SK-N-SH (cell line): ENCODE measurements at regions of chr9 and their contacts with region 1.

Region 1: DNA sequence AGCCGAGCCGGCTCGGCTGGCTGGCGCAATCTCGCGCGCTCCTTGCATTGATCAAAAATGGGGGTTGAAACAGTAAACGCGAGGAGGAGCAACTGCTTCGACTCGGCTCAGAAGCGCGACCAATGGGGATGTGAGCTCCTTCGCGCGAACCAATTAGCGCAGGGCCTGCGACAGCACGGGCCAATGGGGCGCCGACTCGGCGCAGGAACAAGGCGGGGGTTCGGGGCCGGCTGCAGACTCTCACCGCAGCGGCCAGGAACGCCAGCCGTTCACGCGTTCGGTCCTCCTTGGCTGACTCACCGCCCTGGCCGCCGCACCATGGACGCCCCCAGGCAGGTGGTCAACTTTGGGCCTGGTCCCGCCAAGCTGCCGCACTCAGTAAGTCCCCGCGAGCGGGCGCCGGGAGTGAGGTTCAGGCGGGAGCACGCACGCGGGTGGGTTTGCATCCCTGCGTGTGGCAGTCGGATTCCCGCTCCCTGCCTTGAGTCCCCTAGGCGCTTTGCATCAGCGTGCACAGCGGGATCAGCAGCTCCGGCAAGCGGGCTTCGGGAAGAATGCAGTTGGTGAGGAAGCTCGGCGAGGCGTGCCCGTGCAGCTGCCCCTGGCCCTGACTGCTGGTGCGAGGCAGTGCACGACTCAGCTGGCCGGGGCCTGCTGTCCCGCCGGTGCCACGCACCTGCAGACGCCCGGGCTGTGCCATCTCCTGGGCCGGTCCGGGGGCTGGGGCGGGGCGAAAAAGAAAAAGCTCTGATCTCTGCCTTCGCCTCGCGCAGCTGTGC is at the start of gene PSAT1:
- DNase-seq: peak; percentile 98
- H3K4me3 ChIP-seq: peak within 1 kb of the TSS; percentile 92 to 93
- H3K27ac ChIP-seq: peak within 1 kb of the TSS; percentile 55 to 95
- H3K4me1 ChIP-seq: peaks cover 4 to 14% of the 10 kb centered on the region in 2 experiments; a peak in 2 of 4 replicates
- H3K27me3 ChIP-seq: no peaks in the 10 kb centered on the region
- CTCF ChIP-seq: peak; percentile 17; the same call in 1 of the 2 replicates
- EP300 ChIP-seq: no peak; a peak in 1 of 4 replicates
- RAD21 ChIP-seq: 0 out of 2 replicates have a peak, but pooled peaks have one; percentile 2
- polyA plus RNA-seq, gene PSAT1: 37.0 and 52.4 TPM in 2 replicates

Region 2: DNA sequence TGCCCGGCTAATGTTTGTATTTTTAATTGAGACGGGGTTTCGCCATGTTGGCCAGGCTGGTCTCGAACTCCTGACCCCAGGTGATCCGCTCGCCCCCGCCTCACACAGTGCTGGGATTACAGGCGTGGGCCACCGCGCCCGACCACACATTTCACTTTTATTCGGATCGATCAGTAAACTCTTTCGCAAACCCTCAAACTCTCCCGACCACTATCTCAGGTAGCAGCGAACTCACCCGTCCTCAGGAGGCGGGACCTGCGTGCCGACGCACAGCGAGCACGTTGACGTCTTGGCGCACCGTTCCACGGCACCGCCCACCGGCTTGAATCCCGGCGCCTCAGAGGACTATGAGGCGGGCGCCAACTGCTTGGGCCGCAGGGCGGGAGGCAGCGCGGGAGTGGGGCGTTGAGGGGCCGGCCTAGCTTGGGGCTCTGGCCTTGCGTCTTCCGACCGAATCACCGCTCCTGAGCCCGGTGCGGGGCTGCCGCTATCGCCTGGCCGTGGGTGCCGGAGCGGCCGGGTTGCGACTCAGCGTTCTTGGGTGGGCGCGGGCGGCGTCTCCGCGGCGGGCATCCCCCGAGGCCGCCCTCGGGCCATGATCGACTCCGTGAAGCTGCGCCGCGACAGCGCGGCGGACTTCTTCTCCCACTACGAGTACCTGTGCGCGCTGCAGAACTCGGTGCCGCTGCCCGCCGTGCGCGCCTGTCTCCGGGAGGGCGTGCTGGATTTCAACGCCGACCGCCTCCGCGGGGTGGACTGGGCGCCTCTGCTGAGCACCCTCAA is 61.1 kb before region 1 on chr9 and contains the start of gene CEP78:
- CTCF ChIA-PET with region 1: no interaction called
- POLR2A ChIA-PET with region 1: interaction called, 13 read pairs
- DNase-seq: peak; percentile 93
- H3K4me3 ChIP-seq: peak within 1 kb of the TSS; percentile 82 to 98
- H3K27ac ChIP-seq: peak within 1 kb of the TSS; percentile 61 to 70
- H3K4me1 ChIP-seq: peaks cover 0 to 4% of the 10 kb centered on the region in 2 experiments; a peak in 2 of 4 replicates
- H3K27me3 ChIP-seq: no peaks in the 10 kb centered on the region
- CTCF ChIP-seq: no peak
- EP300 ChIP-seq: no peak
- RAD21 ChIP-seq: no peak
- polyA plus RNA-seq, gene CEP78: 6.2 and 7.9 TPM in 2 replicates

Region 3: DNA sequence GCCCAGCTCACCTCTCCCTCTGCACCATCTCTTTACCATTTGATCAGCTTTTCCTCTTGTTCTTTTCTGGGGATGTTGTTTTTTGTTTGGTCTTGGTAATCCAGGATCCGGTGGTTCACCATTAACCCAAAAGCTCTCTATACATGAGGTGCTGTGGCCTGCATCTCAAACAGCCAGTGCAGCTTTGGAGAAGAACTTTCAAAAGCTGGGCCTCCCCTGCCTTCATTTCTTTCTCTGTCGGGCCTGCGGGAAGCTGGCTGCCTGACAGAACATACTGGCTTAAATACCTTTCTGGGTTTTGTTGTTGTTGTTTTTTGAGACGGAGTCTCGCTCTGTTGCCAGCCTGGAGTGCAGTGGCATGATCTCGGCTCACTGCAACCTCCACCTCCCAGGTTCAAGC is 12.0 kb after region 1 on chr9:
- CTCF ChIA-PET with region 1: interaction called, 4 read pairs
- POLR2A ChIA-PET with region 1: interaction called, 12 read pairs
- DNase-seq: no peak
- H3K4me3 ChIP-seq: no peak overlapping the region
- H3K27ac ChIP-seq: no peak overlapping the region
- H3K4me1 ChIP-seq: peaks cover 0 to 20% of the 10 kb centered on the region in 2 experiments; a peak in 2 of 4 replicates
- H3K27me3 ChIP-seq: no peaks in the 10 kb centered on the region
- CTCF ChIP-seq: no peak
- EP300 ChIP-seq: no peak
- RAD21 ChIP-seq: no peak

Region 4: GRCh38 chr9:78325343-78325742 is 28.3 kb after region 1 on chr9:
- CTCF ChIA-PET with region 1: no interaction called
- POLR2A ChIA-PET with region 1: interaction called, 23 read pairs
- DNase-seq: peak; percentile 76
- H3K4me3 ChIP-seq: no peak overlapping the region
- H3K27ac ChIP-seq: peak overlapping the region in 1 of 2 experiments; percentile 99; a peak in 2 of 4 replicates
- H3K4me1 ChIP-seq: peaks cover 0 to 36% of the 10 kb centered on the region in 2 experiments; a peak in 2 of 4 replicates
- H3K27me3 ChIP-seq: no peaks in the 10 kb centered on the region
- CTCF ChIP-seq: no peak
- EP300 ChIP-seq: peak; percentile 25 to 90; a peak in 3 of 4 replicates
- RAD21 ChIP-seq: no peak